ENCODE measurements at regions of chr3 and their contacts with region 1.

Region 1: GRCh38 chr3:120567370-120568201 is 28.6 kb upstream of the NDUFB4 start:
- DNase-seq: peak; percentile 63
- H3K4me3 ChIP-seq: peak overlapping the region; percentile 35 to 43; a peak in 3 of 4 replicates
- H3K27ac ChIP-seq: peak overlapping the region in 1 of 2 experiments; percentile 74; a peak in 3 of 4 replicates
- H3K4me1 ChIP-seq: peaks cover 5 to 25% of the 10 kb centered on the region in 2 experiments; a peak in 3 of 4 replicates
- H3K27me3 ChIP-seq: no peaks in the 10 kb centered on the region
- CTCF ChIP-seq: peak; percentile 63
- EP300 ChIP-seq: no peak
- RAD21 ChIP-seq: peak; percentile 46

Region 2: DNA sequence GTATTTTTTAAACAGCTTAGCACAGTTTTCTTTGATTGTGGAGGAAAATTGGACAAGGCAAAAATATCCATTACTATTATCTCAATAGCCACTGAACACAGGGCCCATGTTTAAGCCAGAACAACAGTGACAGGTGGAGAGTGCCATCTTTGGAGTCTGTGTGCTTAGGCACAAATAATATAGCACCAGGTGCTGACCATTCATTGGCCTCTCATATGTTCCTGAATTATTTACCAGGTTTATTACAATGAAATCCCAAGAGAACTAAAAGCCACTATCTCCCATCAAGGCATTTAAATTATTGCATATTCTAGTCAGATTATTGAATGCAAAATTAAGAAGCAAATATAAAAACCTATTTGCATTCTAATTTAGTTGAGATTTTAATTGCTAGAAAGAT is 322.2 kb before region 1 on chr3:
- CTCF ChIA-PET with region 1: interaction called, 10 read pairs
- POLR2A ChIA-PET with region 1: no interaction called
- DNase-seq: no peak
- H3K4me3 ChIP-seq: no peak overlapping the region
- H3K27ac ChIP-seq: no peak overlapping the region
- H3K4me1 ChIP-seq: peaks cover 0 to 3% of the 10 kb centered on the region in 2 experiments; a peak in 1 of 4 replicates
- H3K27me3 ChIP-seq: no peaks in the 10 kb centered on the region
- CTCF ChIP-seq: no peak
- EP300 ChIP-seq: no peak
- RAD21 ChIP-seq: no peak

Region 3: DNA sequence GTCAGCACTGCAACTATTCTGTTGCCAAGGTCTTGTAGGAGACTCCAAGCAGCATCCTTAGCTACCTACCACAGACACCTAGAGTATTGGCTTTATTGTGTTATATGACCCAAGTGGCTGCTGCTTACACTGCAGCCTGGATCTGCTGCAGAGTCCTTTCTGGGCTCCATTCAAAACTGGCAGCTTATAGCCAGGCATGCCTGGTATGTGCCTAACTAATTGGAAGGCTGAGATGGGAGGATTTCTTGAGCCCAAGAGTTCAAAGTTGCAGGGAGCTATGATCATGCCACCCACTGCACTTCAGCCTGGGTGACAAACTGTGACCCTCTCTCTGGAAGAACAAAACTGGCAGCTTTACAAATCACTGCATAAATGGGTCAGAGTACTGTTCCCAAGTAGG is 37.2 kb after region 1 on chr3:
- CTCF ChIA-PET with region 1: interaction called, 11 read pairs
- POLR2A ChIA-PET with region 1: no interaction called
- DNase-seq: no peak
- H3K4me3 ChIP-seq: no peak overlapping the region
- H3K27ac ChIP-seq: peak overlapping the region in 1 of 2 experiments; percentile 25; a peak in 1 of 4 replicates
- H3K4me1 ChIP-seq: peaks cover 1 to 32% of the 10 kb centered on the region in 2 experiments; a peak in 3 of 4 replicates
- H3K27me3 ChIP-seq: no peaks in the 10 kb centered on the region
- CTCF ChIP-seq: no peak
- EP300 ChIP-seq: no peak
- RAD21 ChIP-seq: no peak